Left cardiac atrium (tissue), 4 donors: ENCODE measurements at regions of chr5 and their contacts with region 1.

Region 1: GRCh38 chr5:132227485-132228240 is at the start of gene P4HA2:
- DNase-seq: peak; percentile 86
- ATAC-seq: peak; percentile 85 to 86
- total RNA-seq, gene P4HA2: 60.2 to 78.4 TPM

Region 2: DNA sequence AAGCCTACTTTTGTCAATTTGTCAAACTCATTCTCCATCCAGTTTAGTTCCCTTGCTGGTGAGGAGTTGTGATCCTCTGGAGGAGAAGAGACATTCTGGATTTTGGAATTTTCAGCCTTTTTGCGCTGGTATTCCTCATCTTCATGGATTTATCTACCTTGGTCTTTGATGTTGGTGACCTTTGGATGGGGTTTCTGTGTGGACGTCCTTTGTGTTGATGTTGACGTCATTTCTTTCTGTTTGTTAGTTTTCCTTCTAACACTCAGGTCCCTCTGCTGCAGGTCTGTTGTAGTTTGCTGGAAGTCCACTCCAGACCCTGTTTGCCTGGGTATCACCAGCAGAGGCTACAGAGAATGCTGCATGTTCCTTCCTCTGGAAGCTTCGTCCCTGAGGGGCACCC is 71.2 kb before region 1 on chr5:
- intact Hi-C with region 1: no loop called
- DNase-seq: no peak
- ATAC-seq: no peak

Region 3: DNA sequence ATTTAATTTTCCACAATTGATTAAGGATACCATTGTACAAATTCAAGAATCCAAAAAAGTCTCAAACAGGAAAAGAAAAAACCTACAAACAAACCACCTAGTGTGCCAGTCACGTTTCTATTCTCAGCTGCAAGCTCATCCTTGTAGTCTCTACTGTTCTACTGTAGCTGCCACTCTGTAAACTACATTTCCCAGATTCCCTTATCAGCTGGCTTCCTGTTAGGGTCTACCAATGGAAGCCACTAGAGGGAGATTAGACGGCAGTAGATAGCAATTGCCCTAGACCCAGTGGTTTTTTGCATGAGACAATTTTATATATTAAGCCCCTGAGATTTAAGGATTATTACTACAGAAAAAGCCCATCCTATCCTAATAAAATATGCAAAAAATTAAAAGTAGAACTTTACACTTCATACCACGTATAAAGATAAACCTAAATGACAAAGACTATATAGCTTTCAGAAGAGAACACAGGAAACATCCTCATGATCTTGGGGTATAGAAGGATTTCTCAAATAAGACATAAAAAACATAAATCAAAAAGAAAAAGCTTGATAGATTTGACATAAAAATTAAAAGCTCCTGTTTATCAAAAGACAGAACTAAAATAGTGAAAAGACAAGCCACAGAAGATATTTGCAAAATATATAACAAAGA is 37.4 kb before region 1 on chr5:
- intact Hi-C with region 1: loop called in 1 of 2 experiments (anchors 5 kb)
- DNase-seq: no peak
- ATAC-seq: peak; percentile 95 to 96

Region 4: DNA sequence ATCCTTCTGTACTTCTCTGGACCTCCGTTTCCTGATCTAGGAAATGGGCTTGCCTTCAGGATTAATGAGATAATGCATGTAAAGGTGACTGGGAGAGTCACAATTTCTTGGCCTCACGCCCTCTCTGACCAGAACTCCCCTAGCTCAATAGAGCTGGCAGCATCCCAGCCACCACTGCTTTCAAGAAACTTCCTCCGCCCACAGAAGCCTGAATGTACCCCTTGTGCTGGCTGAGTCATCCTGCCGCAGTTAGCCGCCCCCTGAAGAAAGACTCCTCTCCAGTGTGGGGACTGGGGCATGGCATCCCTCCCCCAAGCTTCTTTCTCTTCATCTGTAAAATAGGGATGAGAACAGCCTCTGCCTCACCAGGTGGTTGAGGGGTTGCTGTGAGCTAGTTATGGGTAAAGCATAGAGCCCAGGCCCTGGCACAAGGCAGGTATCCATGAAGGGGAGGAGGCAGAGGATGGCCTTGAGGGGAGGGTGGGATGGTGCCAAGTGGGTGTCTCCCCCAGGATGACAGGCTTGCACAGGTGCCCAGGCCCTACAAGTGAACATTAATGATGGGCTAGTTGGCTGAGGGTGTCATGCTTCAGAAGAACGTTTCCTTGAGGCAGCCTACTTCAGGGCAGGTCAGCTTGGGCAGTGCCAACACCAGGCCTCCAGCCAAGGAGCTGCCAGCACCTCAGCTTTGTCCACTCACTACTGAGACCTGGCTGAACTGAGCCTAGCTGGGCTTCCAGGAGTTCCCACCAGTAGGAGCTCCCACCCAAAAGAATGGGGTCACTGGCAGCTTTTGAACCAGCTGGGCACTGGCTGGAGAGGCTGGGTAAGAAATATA is 33.3 kb after region 1 on chr5:
- intact Hi-C with region 1: loop called in 1 of 2 experiments (anchors 5 kb)
- DNase-seq: peak; percentile 85
- ATAC-seq: peak in 1 of 2 donors; percentile 3